A673 (cell line): ENCODE measurements at regions of chr21 and their contacts with region 1.

Region 1: DNA sequence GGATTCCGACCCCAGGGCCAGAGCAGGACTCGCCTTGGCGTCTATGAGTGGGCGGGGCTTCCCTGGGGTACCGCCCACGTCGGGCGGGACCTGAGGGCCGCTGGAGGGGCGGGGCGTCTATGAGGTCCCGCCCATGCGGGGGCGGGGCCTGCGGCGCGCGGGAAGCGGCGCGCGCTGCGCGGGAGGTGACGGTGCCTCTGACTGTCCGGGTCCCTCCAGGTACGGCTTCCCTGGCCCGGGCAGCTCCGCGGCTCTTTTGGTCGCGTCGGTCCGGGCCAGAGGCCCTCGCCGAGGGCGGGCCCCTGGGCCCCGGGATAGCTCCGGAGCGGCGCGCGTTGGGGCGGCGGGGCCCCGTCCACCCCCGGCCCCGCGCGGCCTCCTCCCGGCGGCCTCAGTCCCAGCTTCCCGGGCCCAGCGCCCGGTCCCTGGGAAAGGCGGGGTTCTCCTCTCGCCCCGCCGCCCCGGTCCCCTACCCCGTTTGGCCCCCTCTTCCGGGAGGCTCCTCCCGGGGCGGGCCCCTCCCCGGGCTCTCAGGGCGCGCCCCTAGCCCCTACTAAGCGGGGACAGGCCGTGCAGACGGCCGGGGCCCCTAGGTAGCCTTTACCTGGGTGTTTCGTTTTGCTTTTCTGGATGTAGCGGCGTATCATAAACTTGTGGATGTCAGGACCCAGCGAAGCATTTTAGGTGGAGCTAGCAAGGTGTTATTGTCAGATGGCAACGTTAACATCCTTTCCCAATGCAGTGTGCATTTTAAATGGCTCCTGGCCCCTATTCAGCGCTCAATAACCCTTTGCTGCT is at the start of gene CHAF1B:
- DNase-seq: peak; percentile 81
- H3K4me3 ChIP-seq: peak within 1 kb of the TSS; percentile 70
- H3K27ac ChIP-seq: peak within 1 kb of the TSS; percentile 80
- H3K4me1 ChIP-seq: peaks cover 24% of the 10 kb centered on the region
- H3K27me3 ChIP-seq: no peaks in the 10 kb centered on the region
- CTCF ChIP-seq: no peak
- total RNA-seq, gene CHAF1B: 52.7 and 53.4 TPM in 2 replicates

Region 2: GRCh38 chr21:35547946-35548774 is 837.3 kb before region 1 on chr21:
- CTCF ChIA-PET with region 1: no interaction called
- POLR2A ChIA-PET with region 1: no interaction called
- intact Hi-C with region 1: no loop called
- DNase-seq: no peak
- H3K4me3 ChIP-seq: no peak overlapping the region
- H3K27ac ChIP-seq: no peak overlapping the region
- H3K4me1 ChIP-seq: no peaks in the 10 kb centered on the region
- H3K27me3 ChIP-seq: peaks cover 19% of the 10 kb centered on the region
- CTCF ChIP-seq: no peak

Region 3: DNA sequence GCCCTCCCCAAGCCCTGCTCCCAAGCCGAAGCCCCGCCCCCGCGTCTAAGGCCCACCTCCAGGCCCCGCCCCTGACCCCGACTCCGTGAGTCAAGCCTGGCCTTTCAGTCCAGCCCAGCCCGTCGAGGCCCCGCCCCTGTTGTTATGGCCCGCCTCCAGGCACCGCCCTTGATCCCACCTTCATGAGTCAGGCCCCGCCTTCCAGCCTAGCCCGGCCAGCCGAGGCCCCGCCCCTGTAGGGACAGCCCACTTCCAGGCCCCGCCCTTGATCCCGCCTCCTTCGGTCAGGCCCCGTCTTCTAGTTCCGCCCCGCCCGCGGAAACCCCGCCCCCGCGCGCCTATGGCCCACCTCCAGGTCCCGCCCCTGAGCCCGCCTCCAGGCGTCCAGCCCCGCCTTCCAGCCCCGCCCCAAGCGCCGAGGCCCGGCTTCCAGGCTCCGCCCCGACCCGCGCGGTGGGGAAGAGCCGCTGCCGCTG is 229.1 kb before region 1 on chr21:
- CTCF ChIA-PET with region 1: no interaction called
- POLR2A ChIA-PET with region 1: no interaction called
- intact Hi-C with region 1: loop called (anchors 5 kb)
- DNase-seq: peak; percentile 98
- H3K4me3 ChIP-seq: peak overlapping the region; percentile 97
- H3K27ac ChIP-seq: peak overlapping the region; percentile 79
- H3K4me1 ChIP-seq: peaks cover 4% of the 10 kb centered on the region
- H3K27me3 ChIP-seq: no peaks in the 10 kb centered on the region
- CTCF ChIP-seq: no peak

Region 4: DNA sequence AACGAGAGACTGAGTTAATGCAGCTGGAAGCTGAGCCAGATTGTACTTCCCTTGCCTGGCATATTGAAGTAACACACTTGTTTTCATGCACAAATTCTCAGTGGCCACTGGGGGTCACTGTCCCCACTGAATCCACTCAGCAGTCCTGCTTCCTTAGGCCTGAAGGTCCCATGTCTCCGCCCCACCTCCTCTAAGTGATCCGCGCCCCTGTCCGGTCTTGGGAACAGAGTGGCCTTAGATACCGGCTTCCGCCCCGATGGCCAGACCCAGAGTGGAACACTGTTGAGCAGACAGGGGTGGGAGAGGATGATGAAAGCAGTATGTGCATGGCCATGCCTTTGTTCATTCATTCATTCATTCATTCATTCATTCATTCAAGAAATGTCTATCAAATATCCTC is 34.6 kb after region 1 on chr21:
- CTCF ChIA-PET with region 1: no interaction called
- POLR2A ChIA-PET with region 1: no interaction called
- intact Hi-C with region 1: no loop called
- DNase-seq: peak; percentile 90
- H3K4me3 ChIP-seq: no peak overlapping the region
- H3K27ac ChIP-seq: peak overlapping the region; percentile 52
- H3K4me1 ChIP-seq: peaks cover 27% of the 10 kb centered on the region
- H3K27me3 ChIP-seq: no peaks in the 10 kb centered on the region
- CTCF ChIP-seq: peak; percentile 86

Region 5: GRCh38 chr21:36630485-36631206 is 245.2 kb after region 1 on chr21:
- CTCF ChIA-PET with region 1: interaction called, 10 read pairs
- POLR2A ChIA-PET with region 1: no interaction called
- intact Hi-C with region 1: no loop called
- DNase-seq: peak; percentile 66
- H3K4me3 ChIP-seq: no peak overlapping the region
- H3K27ac ChIP-seq: no peak overlapping the region
- H3K4me1 ChIP-seq: no peaks in the 10 kb centered on the region
- H3K27me3 ChIP-seq: no peaks in the 10 kb centered on the region
- CTCF ChIP-seq: peak; percentile 90